Common myeloid progenitor, CD34-positive (primary cell): ENCODE measurements at regions of chr6 and their contacts with region 1.

Region 1: GRCh38 chr6:44265007-44265721 is at the start of gene NFKBIE:
- DNase-seq: peak in 1 of 3 donors; percentile 91
- H3K4me3 ChIP-seq: peak within 1 kb of the TSS; percentile 70 to 91 (median 85)
- H3K27ac ChIP-seq: peak within 1 kb of the TSS; percentile 86 to 92
- H3K4me1 ChIP-seq: peaks cover 8 to 46% (median 39%) of the 10 kb centered on the region in 4 experiments
- H3K27me3 ChIP-seq: peaks cover 3 to 20% (median 10%) of the 10 kb centered on the region in 5 experiments

Region 2: DNA sequence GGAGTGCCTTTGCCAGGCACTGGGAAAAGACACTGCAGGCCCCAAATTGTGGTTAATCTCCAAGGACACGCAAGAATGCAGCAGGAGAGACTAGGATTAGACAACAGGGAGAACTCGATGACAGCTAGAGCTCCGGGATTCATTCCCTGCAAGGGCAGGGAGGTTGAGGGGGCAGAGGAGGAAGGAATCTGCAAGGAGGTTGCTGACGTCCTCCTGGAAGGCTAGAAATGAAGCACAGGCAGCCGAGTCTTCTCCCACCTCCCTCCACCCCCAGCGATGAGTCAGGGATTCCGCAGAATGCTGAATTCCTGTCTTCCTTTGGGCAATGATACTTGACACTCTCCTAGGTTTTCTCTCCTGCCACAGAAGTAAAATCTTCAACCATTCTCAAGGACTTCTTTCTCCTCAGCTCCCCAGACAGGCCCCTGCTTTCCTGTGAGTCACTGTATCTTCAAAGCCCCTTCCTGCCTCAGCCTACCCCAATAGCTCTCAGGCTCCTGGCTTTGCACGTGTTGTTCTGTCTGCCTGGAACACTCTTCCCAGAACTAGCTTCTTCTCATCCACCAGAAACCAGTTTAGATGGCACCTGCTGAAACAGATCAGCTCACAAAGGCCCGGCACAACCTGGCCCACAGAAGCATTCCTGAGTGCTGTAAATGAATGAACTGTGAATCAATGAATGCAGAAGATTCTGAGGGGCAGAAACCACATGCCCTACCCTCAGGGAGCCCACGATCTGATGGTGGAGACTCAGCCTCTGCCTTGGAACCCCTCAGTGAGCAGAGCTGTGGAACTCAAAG is 223.5 kb before region 1 on chr6:
- CTCF ChIA-PET with region 1: no interaction called
- POLR2A ChIA-PET with region 1: no interaction called
- DNase-seq: peak in 2 of 3 donors; percentile 40 to 49
- H3K4me3 ChIP-seq: no peak overlapping the region
- H3K27ac ChIP-seq: peak overlapping the region in 1 of 2 experiments; percentile 67
- H3K4me1 ChIP-seq: peaks cover 0 to 22% (median 10%) of the 10 kb centered on the region in 4 experiments
- H3K27me3 ChIP-seq: no peaks in the 10 kb centered on the region

Region 3: DNA sequence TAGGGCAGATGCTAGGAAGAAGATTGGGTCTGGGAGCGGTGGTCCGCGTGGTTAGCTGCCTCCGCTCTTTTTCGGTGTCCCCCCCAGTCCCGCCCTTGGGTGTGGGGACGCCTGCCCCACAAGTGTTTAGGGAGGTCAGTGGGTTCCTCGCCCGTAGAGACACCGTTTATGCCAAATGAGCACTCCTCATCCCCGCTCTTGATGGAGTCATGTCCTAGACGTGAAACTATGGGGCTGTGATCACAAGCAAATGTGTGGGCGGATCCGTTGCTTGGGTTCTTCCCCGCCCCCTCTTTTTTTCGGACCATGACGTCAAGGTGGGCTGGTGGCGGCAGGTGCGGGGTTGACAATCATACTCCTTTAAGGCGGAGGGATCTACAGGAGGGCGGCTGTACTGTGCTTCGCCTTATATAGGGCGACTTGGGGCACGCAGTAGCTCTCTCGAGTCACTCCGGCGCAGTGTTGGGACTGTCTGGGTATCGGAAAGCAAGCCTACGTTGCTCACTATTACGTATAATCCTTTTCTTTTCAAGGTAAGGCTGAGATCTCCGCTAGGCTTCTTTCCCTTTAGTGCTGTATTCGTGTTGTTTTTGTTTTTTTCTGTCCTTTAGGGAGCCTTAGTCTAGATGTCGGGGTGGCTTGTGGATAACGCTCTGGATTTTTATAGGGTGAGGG is 18.4 kb before region 1 on chr6 and contains the start of gene HSP90AB1:
- CTCF ChIA-PET with region 1: interaction called, 10 read pairs
- POLR2A ChIA-PET with region 1: interaction called, 40 read pairs
- DNase-seq: peak; percentile 98 to 99 (median 99)
- H3K4me3 ChIP-seq: peak within 1 kb of the TSS; percentile 67 to 100 (median 97)
- H3K27ac ChIP-seq: peak within 1 kb of the TSS; percentile 88 to 96
- H3K4me1 ChIP-seq: peaks cover 13 to 39% (median 31%) of the 10 kb centered on the region in 4 experiments
- H3K27me3 ChIP-seq: no peaks in the 10 kb centered on the region

Region 4: DNA sequence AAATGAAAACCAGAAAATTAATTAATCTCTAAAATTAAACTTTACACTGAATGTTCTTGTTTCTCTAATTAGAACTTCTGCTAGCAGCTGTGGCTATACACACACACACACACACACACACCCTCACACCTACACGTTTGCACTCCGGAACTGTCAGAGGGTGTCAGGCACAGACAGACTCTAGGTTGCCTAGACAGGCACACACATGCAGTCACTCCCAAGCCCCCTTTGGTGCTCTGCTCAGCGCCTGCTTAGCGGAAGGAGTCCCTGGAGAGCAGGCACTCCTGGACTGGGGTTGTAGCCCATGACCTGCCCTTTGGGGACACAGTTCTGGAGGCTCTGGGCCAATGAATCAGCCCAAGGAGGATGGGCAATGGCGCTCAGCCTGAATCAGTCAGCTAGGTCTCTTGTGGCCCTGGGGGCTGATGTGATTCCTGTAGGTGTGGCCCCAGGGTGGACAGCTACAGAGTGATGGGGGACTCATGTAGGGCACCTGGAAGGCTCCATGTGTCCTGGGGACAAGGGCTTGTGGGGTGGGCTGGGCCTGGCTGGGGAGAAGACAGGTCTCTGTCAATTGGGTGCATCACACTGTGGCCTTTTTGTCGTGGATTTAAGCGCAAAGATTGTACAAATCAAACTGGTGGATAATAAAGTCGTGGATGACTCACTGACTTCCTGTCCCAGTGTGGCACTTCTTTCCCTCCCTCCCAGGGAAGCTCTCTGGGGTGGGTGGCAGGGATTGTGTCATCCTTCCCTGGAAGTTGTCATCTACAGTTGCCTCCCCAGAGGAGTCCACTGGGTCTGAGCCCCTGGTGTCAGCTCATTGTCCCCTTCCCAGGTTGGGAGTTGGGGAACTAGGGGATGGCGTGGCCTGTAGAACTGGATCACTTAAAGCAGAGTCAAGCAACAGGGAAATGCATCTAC is 13.9 kb after region 1 on chr6:
- CTCF ChIA-PET with region 1: interaction called, 23 read pairs
- POLR2A ChIA-PET with region 1: no interaction called
- DNase-seq: no peak
- H3K4me3 ChIP-seq: no peak overlapping the region
- H3K27ac ChIP-seq: no peak overlapping the region
- H3K4me1 ChIP-seq: peaks cover 0 to 12% (median 8%) of the 10 kb centered on the region in 4 experiments
- H3K27me3 ChIP-seq: peaks cover 0 to 65% (median 28%) of the 10 kb centered on the region in 5 experiments

Region 5: GRCh38 chr6:44304282-44305199 is 39.4 kb after region 1 on chr6:
- CTCF ChIA-PET with region 1: interaction called, 202 read pairs
- POLR2A ChIA-PET with region 1: interaction called, 5 read pairs
- DNase-seq: peak; percentile 45 to 59 (median 58)
- H3K4me3 ChIP-seq: no peak overlapping the region
- H3K27ac ChIP-seq: no peak overlapping the region
- H3K4me1 ChIP-seq: no peaks in the 10 kb centered on the region
- H3K27me3 ChIP-seq: no peaks in the 10 kb centered on the region

Region 6: GRCh38 chr6:44332585-44332984 is 67.4 kb after region 1 on chr6:
- CTCF ChIA-PET with region 1: interaction called, 76 read pairs
- POLR2A ChIA-PET with region 1: no interaction called
- DNase-seq: no peak
- H3K4me3 ChIP-seq: no peak overlapping the region
- H3K27ac ChIP-seq: no peak overlapping the region
- H3K4me1 ChIP-seq: peaks cover 0 to 7% (median under 1%) of the 10 kb centered on the region in 4 experiments
- H3K27me3 ChIP-seq: peaks cover 2 to 24% (median 9%) of the 10 kb centered on the region in 5 experiments